Naive thymus-derived CD4-positive, alpha-beta T cell (primary cell): ENCODE measurements at regions of chr6 and their contacts with region 1.

Region 1: GRCh38 chr6:146543211-146543939 is at the start of gene RAB32:
- DNase-seq: peak in 2 of 9 donors; percentile 41 to 58
- ATAC-seq: peak; percentile 96
- H3K4me3 ChIP-seq: no peak within 1 kb of the TSS
- H3K4me3 Mint-ChIP-seq: peak within 1 kb of the TSS; percentile 71 to 89 (median 80)
- H3K27ac ChIP-seq: no peak within 1 kb of the TSS
- H3K27ac Mint-ChIP-seq: peak within 1 kb of the TSS in 2 of 9 donors; percentile 37 to 54
- H3K4me1 ChIP-seq: no peaks in the 10 kb centered on the region
- H3K4me1 Mint-ChIP-seq: peaks cover 0 to 18% (median 10%) of the 10 kb centered on the region in 7 donors
- H3K27me3 ChIP-seq: no peaks in the 10 kb centered on the region
- H3K27me3 Mint-ChIP-seq: peaks cover 31 to 57% (median 47%) of the 10 kb centered on the region in 5 donors
- total RNA-seq, gene RAB32: 0.36 to 22.5 (median 1.4) TPM

Region 2: GRCh38 chr6:146700078-146700686 is 156.8 kb after region 1 on chr6:
- CTCF ChIA-PET with region 1: no interaction called
- POLR2A ChIA-PET with region 1: no interaction called
- intact Hi-C with region 1: loop called in 1 of 2 experiments (anchors 10 kb)
- DNase-seq: peak in 8 of 9 donors; percentile 7 to 64 (median 44)
- ATAC-seq: peak; percentile 69
- H3K4me3 ChIP-seq: no peak overlapping the region
- H3K4me3 Mint-ChIP-seq: no peak overlapping the region
- H3K27ac ChIP-seq: no peak overlapping the region
- H3K27ac Mint-ChIP-seq: no peak overlapping the region
- H3K4me1 ChIP-seq: no peaks in the 10 kb centered on the region
- H3K4me1 Mint-ChIP-seq: no peaks in the 10 kb centered on the region
- H3K27me3 ChIP-seq: no peaks in the 10 kb centered on the region
- H3K27me3 Mint-ChIP-seq: peaks cover 0 to 5% (median 0%) of the 10 kb centered on the region in 5 donors

Region 3: GRCh38 chr6:146785001-146785585 is 241.7 kb after region 1 on chr6:
- CTCF ChIA-PET with region 1: no interaction called
- POLR2A ChIA-PET with region 1: no interaction called
- intact Hi-C with region 1: loop called in 1 of 2 experiments (anchors 10 kb)
- DNase-seq: peak in 6 of 9 donors; percentile 17 to 56 (median 45)
- ATAC-seq: peak; percentile 92
- H3K4me3 ChIP-seq: no peak overlapping the region
- H3K4me3 Mint-ChIP-seq: no peak overlapping the region
- H3K27ac ChIP-seq: no peak overlapping the region
- H3K27ac Mint-ChIP-seq: no peak overlapping the region
- H3K4me1 ChIP-seq: no peaks in the 10 kb centered on the region
- H3K4me1 Mint-ChIP-seq: peaks cover 0 to 13% (median 3%) of the 10 kb centered on the region in 7 donors
- H3K27me3 ChIP-seq: no peaks in the 10 kb centered on the region
- H3K27me3 Mint-ChIP-seq: peaks cover 0 to 11% (median 0%) of the 10 kb centered on the region in 5 donors